ENCODE measurements at regions of chr22 and their contacts with region 1.

Region 1: GRCh38 chr22:38353142-38353629 is 36.0 kb upstream of the CSNK1E start:
- DNase-seq: peak; percentile 63
- H3K4me3 ChIP-seq: no peak overlapping the region
- H3K27ac ChIP-seq: no peak overlapping the region
- H3K4me1 ChIP-seq: no peaks in the 10 kb centered on the region
- CTCF ChIP-seq: peak; percentile 92

Region 2: DNA sequence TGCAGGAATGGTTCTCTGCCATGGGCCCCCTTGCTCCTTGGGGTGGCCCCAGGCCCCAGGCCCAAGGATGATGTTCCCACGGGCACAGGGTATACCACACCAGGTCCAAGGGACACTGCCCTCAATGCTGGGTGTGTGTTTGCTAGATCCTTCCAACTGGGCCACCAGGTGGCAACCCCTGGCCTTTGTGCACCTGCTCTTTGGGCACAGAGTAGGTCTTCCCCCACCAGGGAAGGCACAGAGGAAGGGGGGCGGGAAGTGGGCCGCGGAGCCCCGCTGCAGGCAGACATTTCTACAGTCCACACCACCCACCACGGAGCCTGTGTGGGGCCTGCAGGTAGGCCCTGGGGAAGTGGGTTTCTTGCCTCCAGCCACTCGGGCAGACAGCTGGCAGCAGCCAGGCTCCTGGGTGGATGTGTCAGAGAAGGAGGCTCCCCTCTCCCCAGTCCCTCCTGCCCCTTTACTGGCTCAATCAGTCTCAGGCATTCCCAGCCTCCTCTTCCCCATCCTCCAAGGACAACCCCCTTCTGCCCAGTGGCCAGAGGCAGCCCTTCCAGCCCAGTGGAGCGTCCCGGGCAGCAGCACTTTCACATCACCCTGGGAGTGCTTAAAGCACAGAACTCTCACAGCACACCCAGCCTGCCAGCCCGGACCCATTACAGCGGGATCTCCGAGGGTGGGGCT is 129.8 kb before region 1 on chr22:
- CTCF ChIA-PET with region 1: no interaction called
- POLR2A ChIA-PET with region 1: no interaction called
- intact Hi-C with region 1: loop called (anchors 1 kb)
- DNase-seq: peak; percentile 65
- H3K4me3 ChIP-seq: no peak overlapping the region
- H3K27ac ChIP-seq: no peak overlapping the region
- H3K4me1 ChIP-seq: peaks cover 13% of the 10 kb centered on the region
- CTCF ChIP-seq: peak; percentile 72

Region 3: DNA sequence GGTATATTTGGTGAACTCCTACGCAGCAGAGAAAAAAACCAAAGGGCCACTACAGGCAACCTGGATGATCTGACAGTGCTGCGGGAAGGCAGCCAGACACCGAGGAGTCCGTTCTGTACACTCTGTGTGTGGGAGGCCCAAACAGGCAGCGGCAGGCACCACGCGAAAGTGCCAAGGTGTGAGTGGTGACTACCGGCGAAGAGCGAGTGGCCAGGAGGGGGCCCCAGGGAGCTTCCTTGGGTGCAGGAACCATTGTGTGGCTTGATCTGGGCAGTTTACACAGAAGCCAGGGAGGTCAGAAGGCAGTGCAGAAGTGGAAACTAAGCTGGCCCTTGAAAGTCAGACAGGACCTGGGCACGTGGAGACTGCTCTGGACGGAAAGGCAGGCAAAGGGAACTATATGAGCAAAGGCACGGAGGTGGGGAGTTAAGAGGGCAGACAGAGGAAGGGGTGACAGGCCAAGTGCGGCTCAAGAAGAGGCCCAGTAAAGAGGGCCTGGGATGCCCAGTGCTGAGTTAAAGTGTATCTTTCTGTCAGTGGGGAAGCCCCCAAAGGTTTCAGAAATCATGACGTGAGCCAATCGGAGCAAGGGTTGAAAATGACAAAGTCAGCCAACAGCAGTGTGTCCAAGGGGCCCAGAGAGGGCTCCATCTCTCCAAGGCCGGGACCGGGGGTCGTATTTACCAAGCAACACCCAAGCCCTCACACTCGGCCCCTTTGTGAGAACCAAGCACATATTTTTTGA is 91.0 kb before region 1 on chr22:
- CTCF ChIA-PET with region 1: no interaction called
- POLR2A ChIA-PET with region 1: no interaction called
- intact Hi-C with region 1: loop called (anchors 1 kb)
- DNase-seq: peak; percentile 64
- H3K4me3 ChIP-seq: no peak overlapping the region
- H3K27ac ChIP-seq: peak overlapping the region; percentile 29
- H3K4me1 ChIP-seq: peaks cover 67% of the 10 kb centered on the region
- CTCF ChIP-seq: peak; percentile 86

Region 4: GRCh38 chr22:38298312-38299000 is 54.7 kb before region 1 on chr22:
- CTCF ChIA-PET with region 1: no interaction called
- POLR2A ChIA-PET with region 1: no interaction called
- intact Hi-C with region 1: loop called (anchors 2 kb)
- DNase-seq: peak; percentile 53
- H3K4me3 ChIP-seq: no peak overlapping the region
- H3K27ac ChIP-seq: no peak overlapping the region
- H3K4me1 ChIP-seq: no peaks in the 10 kb centered on the region
- CTCF ChIP-seq: peak; percentile 77

Region 5: DNA sequence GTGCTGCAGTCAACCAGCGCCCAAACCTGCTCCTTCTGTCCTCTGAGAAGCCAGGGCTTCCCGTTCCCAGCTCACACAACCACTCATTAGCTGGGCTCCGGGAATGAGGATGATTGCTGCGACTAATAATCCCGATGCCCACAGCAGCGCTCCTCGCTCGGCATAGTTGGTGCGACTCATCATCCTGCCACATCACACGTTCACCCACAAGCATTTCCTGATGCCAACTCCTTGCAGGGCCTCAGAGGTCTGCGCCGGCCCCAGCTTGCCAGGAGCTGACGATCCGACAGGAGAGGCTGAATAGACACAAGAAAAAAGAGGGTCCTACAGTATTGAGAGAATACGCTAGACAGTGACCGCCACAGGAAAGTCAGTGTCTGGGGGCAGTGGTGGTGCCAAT is 25.4 kb before region 1 on chr22:
- CTCF ChIA-PET with region 1: no interaction called
- POLR2A ChIA-PET with region 1: no interaction called
- intact Hi-C with region 1: no loop called
- DNase-seq: no peak
- H3K4me3 ChIP-seq: no peak overlapping the region
- H3K27ac ChIP-seq: no peak overlapping the region
- H3K4me1 ChIP-seq: peaks cover 7% of the 10 kb centered on the region
- CTCF ChIP-seq: no peak

Measured in OCI-LY7 (cell line).